PC-3 (cell line): ENCODE measurements at regions of chr1 and their contacts with region 1.

Region 1: GRCh38 chr1:52920791-52921291 is 699 bp downstream of the ECHDC2 start:
- DNase-seq: peak; percentile 31
- ATAC-seq: peak; percentile 69
- H3K4me3 ChIP-seq: peak overlapping the region; percentile 98
- H3K27ac ChIP-seq: peak overlapping the region; percentile 52
- H3K4me1 ChIP-seq: peaks cover 23% of the 10 kb centered on the region
- H3K27me3 ChIP-seq: no peaks in the 10 kb centered on the region
- CTCF ChIP-seq: no peak

Region 2: GRCh38 chr1:52792036-52792435 is 128.8 kb before region 1 on chr1:
- CTCF ChIA-PET with region 1: no interaction called
- POLR2A ChIA-PET with region 1: no interaction called
- intact Hi-C with region 1: no loop called
- DNase-seq: peak; percentile 4
- ATAC-seq: no peak
- H3K4me3 ChIP-seq: no peak overlapping the region
- H3K27ac ChIP-seq: no peak overlapping the region
- H3K4me1 ChIP-seq: no peaks in the 10 kb centered on the region
- H3K27me3 ChIP-seq: no peaks in the 10 kb centered on the region
- CTCF ChIP-seq: no peak

Region 3: DNA sequence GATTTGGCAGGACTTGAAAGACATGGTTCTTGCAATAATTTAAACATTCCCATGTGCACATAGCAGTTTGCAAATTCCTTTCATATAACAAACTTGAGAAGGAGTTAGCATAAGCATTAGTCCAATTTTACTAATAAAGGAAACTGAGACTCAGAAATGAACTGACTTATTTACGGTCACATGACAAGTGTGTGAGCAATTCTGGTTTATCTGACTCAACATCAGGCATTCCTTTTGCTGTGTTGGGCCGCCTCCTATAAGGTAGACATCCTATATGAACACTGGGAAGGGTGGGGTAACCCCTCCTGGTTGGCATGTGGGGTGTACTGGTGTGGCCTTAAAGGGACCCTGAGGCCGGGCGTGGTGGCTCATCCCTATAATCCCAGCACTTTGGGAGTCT is 267.3 kb after region 1 on chr1:
- CTCF ChIA-PET with region 1: no interaction called
- POLR2A ChIA-PET with region 1: no interaction called
- intact Hi-C with region 1: loop called (anchors 5 kb)
- DNase-seq: peak; percentile 58
- ATAC-seq: peak; percentile 55
- H3K4me3 ChIP-seq: no peak overlapping the region
- H3K27ac ChIP-seq: no peak overlapping the region
- H3K4me1 ChIP-seq: peaks cover 21% of the 10 kb centered on the region
- H3K27me3 ChIP-seq: no peaks in the 10 kb centered on the region
- CTCF ChIP-seq: no peak